ENCODE measurements at regions of chr17 and their contacts with region 1.

Region 1: DNA sequence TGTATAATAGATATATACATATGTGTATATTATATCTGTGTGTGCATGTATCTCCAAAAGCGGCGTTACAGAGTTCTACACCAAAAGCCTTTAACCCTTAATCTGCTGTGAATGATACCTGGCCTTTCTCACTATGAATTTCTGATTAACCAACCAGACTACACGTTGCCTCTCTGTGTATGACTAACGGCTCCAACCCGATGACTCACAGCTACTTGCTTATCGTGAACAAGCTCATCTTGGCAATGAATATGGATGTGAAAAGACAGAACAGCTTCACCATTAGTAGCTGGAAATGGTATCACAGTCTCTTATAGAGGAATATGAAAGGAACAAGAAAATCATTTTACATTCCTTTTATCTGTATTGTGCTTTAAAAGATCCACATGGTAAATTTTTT is 23.8 kb upstream of the ARHGAP44 start:
- DNase-seq: no peak
- H3K4me3 ChIP-seq: no peak overlapping the region
- H3K4me3 Mint-ChIP-seq: no peak overlapping the region
- H3K27ac Mint-ChIP-seq: no peak overlapping the region
- H3K4me1 ChIP-seq: no peaks in the 10 kb centered on the region
- H3K4me1 Mint-ChIP-seq: no peaks in the 10 kb centered on the region
- H3K27me3 ChIP-seq: no peaks in the 10 kb centered on the region
- H3K27me3 Mint-ChIP-seq: peaks cover 9% of the 10 kb centered on the region
- CTCF ChIP-seq: no peak

Region 2: GRCh38 chr17:12330456-12330855 is 435.1 kb before region 1 on chr17:
- CTCF ChIA-PET with region 1: no interaction called
- POLR2A ChIA-PET with region 1: no interaction called
- intact Hi-C with region 1: loop called (anchors 10 kb)
- DNase-seq: no peak
- H3K4me3 ChIP-seq: no peak overlapping the region
- H3K4me3 Mint-ChIP-seq: no peak overlapping the region
- H3K27ac Mint-ChIP-seq: no peak overlapping the region
- H3K4me1 ChIP-seq: no peaks in the 10 kb centered on the region
- H3K4me1 Mint-ChIP-seq: no peaks in the 10 kb centered on the region
- H3K27me3 ChIP-seq: no peaks in the 10 kb centered on the region
- H3K27me3 Mint-ChIP-seq: no peaks in the 10 kb centered on the region
- CTCF ChIP-seq: no peak

Region 3: DNA sequence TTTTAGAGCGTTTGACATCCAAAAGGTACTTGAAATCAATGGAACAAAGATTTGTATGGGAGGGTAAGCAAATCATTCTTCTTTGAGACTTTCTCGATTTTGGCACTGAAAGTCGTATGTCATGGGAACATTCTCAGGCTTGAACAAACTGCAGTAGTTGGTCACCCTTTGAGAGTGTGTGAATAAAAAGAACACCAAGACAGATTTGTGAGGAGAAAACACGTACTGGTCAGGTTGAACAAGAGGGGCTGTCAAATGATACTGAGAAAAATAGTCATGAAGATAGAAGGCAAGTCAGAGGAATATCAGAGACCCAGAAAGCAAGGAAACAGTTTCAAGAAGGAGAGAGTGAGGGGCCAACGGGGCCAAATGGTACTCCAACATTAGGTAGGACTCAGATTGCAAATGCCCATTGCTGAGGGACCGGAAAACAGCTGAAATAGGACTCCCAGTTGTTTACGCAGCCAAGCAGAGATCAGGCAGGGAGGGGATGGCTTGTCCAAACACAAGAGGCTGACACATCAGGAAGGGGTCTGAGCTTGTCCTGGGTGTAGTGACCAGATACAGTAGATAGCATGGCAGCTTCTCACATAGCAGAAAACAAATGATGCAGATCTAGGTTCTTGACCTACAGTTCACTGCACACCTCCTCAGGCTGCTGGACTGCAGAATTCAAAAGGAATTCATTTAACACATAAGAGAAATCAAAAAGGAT is 174.4 kb before region 1 on chr17:
- CTCF ChIA-PET with region 1: no interaction called
- POLR2A ChIA-PET with region 1: no interaction called
- intact Hi-C with region 1: no loop called
- DNase-seq: no peak
- H3K4me3 ChIP-seq: no peak overlapping the region
- H3K4me3 Mint-ChIP-seq: no peak overlapping the region
- H3K27ac Mint-ChIP-seq: no peak overlapping the region
- H3K4me1 ChIP-seq: no peaks in the 10 kb centered on the region
- H3K4me1 Mint-ChIP-seq: no peaks in the 10 kb centered on the region
- H3K27me3 ChIP-seq: no peaks in the 10 kb centered on the region
- H3K27me3 Mint-ChIP-seq: no peaks in the 10 kb centered on the region
- CTCF ChIP-seq: no peak

Region 4: DNA sequence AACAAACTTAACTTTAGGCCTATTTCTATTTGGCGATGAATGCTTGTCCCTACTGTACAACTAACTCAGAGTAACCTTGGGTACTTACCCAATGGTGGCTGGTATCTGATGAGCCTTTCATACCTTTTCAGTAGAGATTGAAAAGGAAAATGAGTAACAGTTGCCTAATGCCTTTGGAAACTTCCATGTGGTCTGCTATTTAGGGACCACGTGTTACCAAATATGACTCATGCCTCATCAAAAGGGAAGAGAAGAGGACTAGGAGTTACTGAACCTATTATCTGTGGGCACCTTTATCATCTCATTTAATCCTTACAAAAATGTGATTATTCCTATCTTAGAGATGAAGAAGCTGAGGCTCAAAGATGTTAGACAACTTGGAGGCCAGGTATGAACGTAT is 91.8 kb before region 1 on chr17:
- CTCF ChIA-PET with region 1: no interaction called
- POLR2A ChIA-PET with region 1: no interaction called
- intact Hi-C with region 1: no loop called
- DNase-seq: no peak
- H3K4me3 ChIP-seq: no peak overlapping the region
- H3K4me3 Mint-ChIP-seq: no peak overlapping the region
- H3K27ac Mint-ChIP-seq: no peak overlapping the region
- H3K4me1 ChIP-seq: no peaks in the 10 kb centered on the region
- H3K4me1 Mint-ChIP-seq: no peaks in the 10 kb centered on the region
- H3K27me3 ChIP-seq: no peaks in the 10 kb centered on the region
- H3K27me3 Mint-ChIP-seq: no peaks in the 10 kb centered on the region
- CTCF ChIP-seq: no peak

Measured in Caco-2 (cell line).